A549 (cell line): ENCODE measurements at regions of chr19 and their contacts with region 1.

Region 1: DNA sequence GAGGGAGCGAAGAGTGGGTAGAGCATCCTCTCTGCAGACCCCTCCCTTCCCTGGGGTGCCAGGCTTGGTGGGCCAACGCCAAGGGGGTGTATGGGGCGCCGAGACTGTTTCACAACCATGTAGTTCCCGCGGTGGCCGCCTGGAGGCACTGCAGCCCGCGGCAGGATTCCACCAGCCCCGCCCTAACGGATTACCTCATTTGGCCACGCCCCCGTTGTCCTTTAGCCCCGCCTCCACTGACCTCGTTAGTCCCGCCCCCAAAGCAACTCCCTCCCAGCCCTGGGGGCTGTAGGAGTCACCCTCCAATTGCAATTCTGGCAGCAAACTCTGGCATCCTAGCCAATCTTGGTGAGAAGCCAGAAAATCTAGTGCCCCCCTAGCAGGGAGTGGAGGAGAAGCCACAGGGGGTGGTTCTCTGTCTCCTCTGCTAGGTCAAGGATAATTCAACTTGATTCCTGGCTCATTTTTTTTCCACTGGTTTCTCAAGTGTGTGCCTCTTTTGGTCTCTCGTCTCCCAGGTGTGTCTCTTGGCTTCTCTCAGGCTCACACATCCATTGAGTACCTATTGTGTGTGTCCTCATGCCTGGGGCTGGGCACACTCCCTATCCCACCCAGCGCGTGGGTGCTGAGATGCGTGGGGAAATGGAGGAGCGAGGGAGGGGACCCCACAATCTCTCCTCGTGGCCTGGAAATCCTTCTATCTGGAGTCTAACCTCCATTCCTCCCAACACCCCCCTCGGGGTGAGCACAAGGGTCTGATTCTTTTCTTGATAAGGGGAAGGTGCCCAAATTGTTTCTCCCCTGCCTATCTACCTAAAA is 2.0 kb downstream of the OLFM2 start:
- DNase-seq: peak; percentile 52 to 75
- ATAC-seq: peak; percentile 38 to 76
- H3K4me3 ChIP-seq: no peak overlapping the region
- H3K27ac ChIP-seq: no peak overlapping the region
- H3K4me1 ChIP-seq: peaks cover 17% of the 10 kb centered on the region
- CTCF ChIP-seq: peak; percentile 74
- EP300 ChIP-seq: no peak
- POLR2A ChIP-seq: no peak
- RAD21 ChIP-seq: peak; percentile 75 to 89

Region 2: GRCh38 chr19:9917321-9917720 is 17.0 kb before region 1 on chr19:
- CTCF ChIA-PET with region 1: interaction called, 10 read pairs
- POLR2A ChIA-PET with region 1: no interaction called
- DNase-seq: peak; percentile 61 to 80
- ATAC-seq: peak; percentile 78 to 87
- H3K4me3 ChIP-seq: no peak overlapping the region
- H3K27ac ChIP-seq: peak overlapping the region in 1 of 2 experiments; percentile 54; a peak in 2 of 6 replicates
- H3K4me1 ChIP-seq: peaks cover 10% of the 10 kb centered on the region; the same call in 1 of the 3 replicates
- CTCF ChIP-seq: no peak
- EP300 ChIP-seq: no peak
- POLR2A ChIP-seq: no peak
- RAD21 ChIP-seq: no peak

Region 3: DNA sequence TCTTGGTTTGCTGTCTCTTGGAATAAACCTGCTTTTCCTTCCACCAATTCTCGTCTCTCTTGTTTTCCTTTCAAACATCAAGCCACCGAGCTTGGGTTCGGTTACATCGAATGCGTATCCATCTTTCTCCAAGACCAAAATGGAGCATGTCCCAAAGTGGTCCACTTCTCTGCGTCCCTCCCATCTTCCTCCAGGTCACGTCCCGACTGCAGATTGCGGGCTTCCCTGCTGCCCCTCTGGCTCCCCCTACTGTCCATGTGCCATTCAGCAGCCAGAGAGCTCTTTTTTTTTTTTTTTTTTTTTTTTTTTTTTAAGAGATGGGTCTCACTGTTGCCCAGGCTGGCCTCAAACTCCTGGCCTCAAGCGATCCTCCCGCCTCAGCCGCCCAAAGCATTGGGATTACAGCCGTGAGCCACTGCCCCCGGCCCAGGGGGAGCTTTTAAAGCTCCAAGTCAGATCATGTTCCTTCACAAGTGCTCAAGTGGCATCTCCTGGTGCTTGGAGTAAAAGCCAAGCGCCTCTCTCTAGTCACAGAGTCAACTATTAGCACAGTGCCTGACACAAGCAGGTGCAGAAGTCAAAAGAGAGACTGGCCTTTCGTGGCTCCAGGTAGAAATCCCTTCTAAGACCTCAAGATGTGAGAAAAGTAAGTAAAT is 66.0 kb after region 1 on chr19:
- CTCF ChIA-PET with region 1: interaction called, 28 read pairs
- POLR2A ChIA-PET with region 1: interaction called, 8 read pairs
- DNase-seq: peak; percentile 70 to 74
- ATAC-seq: peak; percentile 79 to 82; a peak in 5 of 6 replicates
- H3K4me3 ChIP-seq: no peak overlapping the region
- H3K27ac ChIP-seq: no peak overlapping the region
- H3K4me1 ChIP-seq: peaks cover 5% of the 10 kb centered on the region; the same call in 1 of the 3 replicates
- CTCF ChIP-seq: peak; percentile 64
- EP300 ChIP-seq: no peak
- POLR2A ChIP-seq: no peak
- RAD21 ChIP-seq: peak; percentile 63 to 71

Region 4: GRCh38 chr19:10112895-10113591 is 178.7 kb after region 1 on chr19:
- CTCF ChIA-PET with region 1: interaction called, 20 read pairs
- POLR2A ChIA-PET with region 1: interaction called, 4 read pairs
- DNase-seq: peak in 1 of 2 experiments; percentile 64
- ATAC-seq: peak; percentile 35 to 62
- H3K4me3 ChIP-seq: no peak overlapping the region
- H3K27ac ChIP-seq: peak overlapping the region in 1 of 2 experiments; percentile 34; a peak in 2 of 6 replicates
- H3K4me1 ChIP-seq: peaks cover 21% of the 10 kb centered on the region; the same call in 2 of the 3 replicates
- CTCF ChIP-seq: peak; percentile 51
- EP300 ChIP-seq: no peak
- POLR2A ChIP-seq: no peak
- RAD21 ChIP-seq: peak; percentile 30 to 33; a peak in 2 of 5 replicates

Region 5: DNA sequence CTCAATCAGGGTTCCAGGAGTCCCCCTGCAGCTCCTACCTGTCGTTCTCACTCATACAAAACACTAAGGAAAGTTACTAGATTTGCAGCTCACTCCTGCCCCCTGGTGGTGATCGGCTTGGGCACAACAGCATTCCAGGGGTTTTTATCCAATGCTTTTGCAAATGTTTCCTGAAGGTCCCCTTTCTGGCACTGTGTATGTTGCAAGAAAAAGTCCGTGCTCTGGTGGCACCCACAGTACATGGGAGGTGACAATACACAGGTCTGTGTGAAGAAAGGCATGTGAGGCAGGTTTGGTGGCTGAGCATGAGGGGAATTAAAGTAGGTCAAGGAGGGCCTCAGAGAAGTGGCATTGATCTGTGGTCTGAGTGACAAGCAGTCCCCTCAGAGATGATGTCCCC is 454.6 kb after region 1 on chr19:
- CTCF ChIA-PET with region 1: interaction called, 20 read pairs
- POLR2A ChIA-PET with region 1: no interaction called
- DNase-seq: peak; percentile 45 to 77
- ATAC-seq: peak; percentile 75 to 79
- H3K4me3 ChIP-seq: no peak overlapping the region
- H3K27ac ChIP-seq: no peak overlapping the region
- H3K4me1 ChIP-seq: no peaks in the 10 kb centered on the region
- CTCF ChIP-seq: peak; percentile 81
- EP300 ChIP-seq: no peak
- POLR2A ChIP-seq: no peak
- RAD21 ChIP-seq: peak; percentile 81 to 82